ENCODE measurements at regions of chr18 and their contacts with region 1.

Region 1: DNA sequence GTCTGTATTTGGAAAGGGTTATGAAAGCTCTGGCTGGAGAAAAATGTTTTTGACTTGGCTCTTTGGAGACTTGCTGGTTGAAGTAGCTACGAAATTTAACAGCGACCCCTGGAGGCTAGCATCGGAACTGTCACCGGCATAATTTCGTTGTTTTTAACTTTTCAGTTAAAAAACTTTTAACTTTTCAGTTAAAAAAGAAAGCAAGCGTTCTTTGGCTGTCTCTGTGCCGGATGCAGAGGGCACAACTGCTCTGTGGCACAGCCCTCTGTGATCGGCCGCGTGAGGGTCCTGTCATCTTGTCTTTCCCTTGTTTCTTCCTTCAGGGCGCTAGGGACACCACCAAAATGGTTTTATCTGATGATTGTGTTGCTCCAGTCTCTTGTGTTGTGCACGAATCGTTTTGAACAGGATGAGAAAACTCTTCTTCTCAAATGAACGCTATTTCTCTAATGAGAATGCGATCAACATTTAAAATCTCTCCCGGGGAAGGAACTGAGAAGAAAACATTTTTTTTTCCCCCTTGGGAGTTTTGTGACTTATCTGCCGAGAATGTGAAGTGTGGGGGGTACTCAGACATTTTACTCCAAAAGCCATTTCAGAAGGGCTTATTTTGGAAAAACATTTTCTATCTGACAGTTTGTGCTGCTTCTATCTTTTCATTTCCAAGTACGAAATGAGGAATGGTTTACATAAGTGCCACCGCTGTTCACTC is 57.1 kb downstream of the ADCYAP1 start:
- DNase-seq: peak; percentile 23
- H3K4me3 ChIP-seq: peak overlapping the region; percentile 21 to 60; a peak in 3 of 4 replicates
- H3K27ac ChIP-seq: no peak overlapping the region
- H3K4me1 ChIP-seq: no peaks in the 10 kb centered on the region
- H3K27me3 ChIP-seq: peaks cover 11% of the 10 kb centered on the region
- CTCF ChIP-seq: peak; percentile 97
- EP300 ChIP-seq: no peak
- RAD21 ChIP-seq: peak; percentile 51

Region 2: DNA sequence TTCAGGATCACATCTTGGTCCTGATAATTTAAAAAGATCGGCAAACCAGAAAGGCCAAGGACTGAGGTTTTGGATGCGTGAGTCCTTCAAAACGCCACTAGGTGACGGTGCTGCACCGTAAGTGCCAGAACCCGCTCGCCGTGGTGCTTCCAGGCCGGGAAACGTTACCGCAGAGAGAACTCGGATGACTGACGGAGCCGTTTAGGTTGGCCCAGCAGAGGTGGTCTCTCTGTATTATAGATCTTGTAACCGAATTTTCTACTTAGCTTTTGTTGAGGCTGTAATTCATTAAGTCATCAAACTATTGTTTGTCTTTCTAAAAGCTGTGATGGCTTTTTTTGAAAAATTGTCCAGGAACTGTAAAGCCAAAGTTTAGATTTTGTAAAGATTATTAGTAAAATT is 96.9 kb before region 1 on chr18:
- CTCF ChIA-PET with region 1: interaction called, 15 read pairs
- POLR2A ChIA-PET with region 1: no interaction called
- DNase-seq: peak; percentile 60
- H3K4me3 ChIP-seq: peak overlapping the region in 1 of 2 experiments; percentile 39; a peak in 1 of 4 replicates
- H3K27ac ChIP-seq: no peak overlapping the region
- H3K4me1 ChIP-seq: no peaks in the 10 kb centered on the region
- H3K27me3 ChIP-seq: peaks cover 38% of the 10 kb centered on the region; the same call in 1 of the 2 replicates
- CTCF ChIP-seq: peak; percentile 97
- EP300 ChIP-seq: no peak
- RAD21 ChIP-seq: peak; percentile 95

Region 3: DNA sequence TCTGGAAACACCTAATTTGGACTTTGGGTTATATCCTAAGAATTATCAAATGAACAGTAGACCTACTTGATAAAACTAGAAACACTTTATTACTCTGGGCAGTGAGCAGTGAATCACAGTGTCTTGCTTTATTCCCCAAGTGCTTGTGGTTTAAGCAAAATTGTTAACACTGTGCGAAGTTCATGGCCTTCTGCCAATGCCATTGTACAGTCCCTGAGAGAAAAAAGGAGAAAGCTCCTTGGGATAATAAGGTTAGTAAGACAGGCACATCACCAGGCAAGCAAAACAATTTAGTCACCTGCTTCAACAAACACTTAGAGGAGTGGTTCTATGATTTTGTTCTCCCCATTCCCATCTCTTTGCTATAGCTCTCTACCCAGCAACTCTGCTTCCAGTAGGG is 17.4 kb before region 1 on chr18:
- CTCF ChIA-PET with region 1: interaction called, 11 read pairs
- POLR2A ChIA-PET with region 1: no interaction called
- DNase-seq: no peak
- H3K4me3 ChIP-seq: no peak overlapping the region
- H3K27ac ChIP-seq: no peak overlapping the region
- H3K4me1 ChIP-seq: no peaks in the 10 kb centered on the region
- H3K27me3 ChIP-seq: no peaks in the 10 kb centered on the region; the same call in 1 of the 2 replicates
- CTCF ChIP-seq: no peak
- EP300 ChIP-seq: no peak
- RAD21 ChIP-seq: no peak

Region 4: DNA sequence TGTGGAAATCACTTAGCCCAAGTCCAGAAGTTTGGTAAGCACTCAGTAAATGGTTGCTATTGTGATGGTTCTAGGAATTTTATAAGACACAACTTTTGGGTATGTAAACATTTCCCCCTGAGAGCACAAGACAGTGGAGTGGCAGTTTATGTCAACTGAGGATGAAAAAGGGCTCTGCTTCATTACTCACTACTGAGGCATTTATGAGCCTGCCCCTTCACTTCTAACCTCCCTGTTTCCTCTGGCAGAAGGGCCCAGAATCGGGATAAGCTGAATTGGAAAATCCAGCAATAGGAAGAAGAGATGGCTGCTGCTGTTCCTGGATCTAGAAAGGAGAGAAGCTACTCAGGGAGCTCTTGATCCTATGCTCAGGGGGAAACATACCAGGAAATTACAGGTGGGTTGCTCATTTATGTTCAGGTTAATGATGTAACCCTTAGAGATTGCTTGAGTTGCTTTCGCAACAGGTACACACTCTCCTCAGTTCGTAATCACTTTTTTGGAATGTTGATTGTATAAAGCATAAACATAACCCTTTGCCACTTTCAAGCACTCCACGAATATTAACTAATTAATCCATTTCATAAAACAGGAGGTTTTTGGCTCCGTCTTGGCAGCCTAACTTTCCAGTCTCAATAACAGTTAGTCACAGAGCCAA is 10.8 kb before region 1 on chr18:
- CTCF ChIA-PET with region 1: interaction called, 11 read pairs
- POLR2A ChIA-PET with region 1: no interaction called
- DNase-seq: no peak
- H3K4me3 ChIP-seq: no peak overlapping the region
- H3K27ac ChIP-seq: no peak overlapping the region
- H3K4me1 ChIP-seq: no peaks in the 10 kb centered on the region
- H3K27me3 ChIP-seq: no peaks in the 10 kb centered on the region
- CTCF ChIP-seq: no peak
- EP300 ChIP-seq: no peak
- RAD21 ChIP-seq: no peak

Region 5: DNA sequence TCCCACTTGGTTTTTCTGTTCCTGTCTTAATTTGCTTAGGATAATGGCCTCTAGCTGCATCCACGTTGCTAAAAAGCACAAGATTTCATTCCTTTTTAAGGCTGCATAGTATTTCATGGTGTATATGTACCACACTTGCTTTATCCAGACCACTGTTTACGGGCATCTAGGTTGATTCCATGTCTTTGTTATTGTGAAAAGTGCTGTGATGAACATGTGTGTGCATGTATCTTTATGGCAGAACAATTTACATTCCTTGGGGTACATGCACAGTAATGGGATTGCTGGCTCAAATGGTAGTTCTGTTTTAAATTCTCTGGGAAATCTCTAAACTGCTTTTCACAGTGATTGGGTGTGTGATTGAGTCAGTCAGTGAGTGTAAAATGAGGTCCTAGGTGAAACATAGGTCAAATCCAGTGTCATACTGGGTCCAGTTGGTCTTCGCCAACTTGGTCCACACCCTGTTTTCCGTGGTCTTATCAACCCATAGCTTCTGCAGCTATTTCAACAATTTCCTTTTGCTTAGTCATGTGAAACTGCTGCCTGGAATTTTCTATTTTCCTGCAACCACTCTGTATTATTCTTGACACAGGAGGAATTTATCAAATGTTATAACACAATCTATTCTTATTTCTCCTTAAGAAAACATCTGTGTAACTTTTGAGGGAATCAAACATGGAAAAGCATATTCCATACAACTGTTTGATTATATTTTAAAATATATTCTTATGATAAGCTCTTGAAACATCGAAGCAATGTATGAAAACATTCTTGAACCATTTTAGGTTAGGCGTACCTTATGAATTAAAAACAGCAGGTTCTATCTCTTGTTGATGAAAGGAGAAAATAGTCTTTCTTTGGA is 25.8 kb after region 1 on chr18:
- CTCF ChIA-PET with region 1: interaction called, 11 read pairs
- POLR2A ChIA-PET with region 1: no interaction called
- DNase-seq: no peak
- H3K4me3 ChIP-seq: no peak overlapping the region
- H3K27ac ChIP-seq: no peak overlapping the region
- H3K4me1 ChIP-seq: no peaks in the 10 kb centered on the region
- H3K27me3 ChIP-seq: no peaks in the 10 kb centered on the region
- CTCF ChIP-seq: no peak
- EP300 ChIP-seq: no peak
- RAD21 ChIP-seq: no peak